ENCODE measurements at regions of chr7 and their contacts with region 1.

Region 1: DNA sequence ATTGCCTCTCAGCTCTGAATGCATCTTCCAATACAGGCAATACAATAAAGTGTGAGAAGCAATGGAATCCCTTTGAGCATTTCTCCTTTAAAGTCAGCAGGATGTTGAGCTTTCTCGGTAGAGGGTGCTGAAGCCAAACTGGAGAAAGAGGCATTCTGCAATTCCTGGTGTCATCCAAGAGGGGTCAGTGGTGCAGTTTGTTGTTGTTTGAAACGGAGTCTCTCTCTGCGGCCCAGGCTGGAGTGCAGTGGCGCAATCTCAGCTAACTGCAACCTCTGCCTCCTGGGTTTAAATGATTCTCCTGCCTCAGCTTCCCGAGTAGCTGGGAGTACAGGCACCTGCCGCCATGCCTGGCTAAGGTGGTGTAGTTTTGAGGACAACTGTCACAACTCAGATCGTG is 486.5 kb downstream of the CALN1 start:
- DNase-seq: no peak

Region 2: GRCh38 chr7:71254751-71255150 is 670.9 kb before region 1 on chr7:
- intact Hi-C with region 1: loop called in 1 of 2 experiments (anchors 10 kb)
- DNase-seq: no peak

Measured in posterior vena cava (tissue), 2 donors.